Activated CD4-positive, alpha-beta T cell treated with anti-CD3 and anti-CD28 coated beads, Interleukin-2, amount 10 ng/mL, durations not matched to agents 24 days and 14 days (primary cell): ENCODE measurements at regions of chr10 and their contacts with region 1.

Region 1: DNA sequence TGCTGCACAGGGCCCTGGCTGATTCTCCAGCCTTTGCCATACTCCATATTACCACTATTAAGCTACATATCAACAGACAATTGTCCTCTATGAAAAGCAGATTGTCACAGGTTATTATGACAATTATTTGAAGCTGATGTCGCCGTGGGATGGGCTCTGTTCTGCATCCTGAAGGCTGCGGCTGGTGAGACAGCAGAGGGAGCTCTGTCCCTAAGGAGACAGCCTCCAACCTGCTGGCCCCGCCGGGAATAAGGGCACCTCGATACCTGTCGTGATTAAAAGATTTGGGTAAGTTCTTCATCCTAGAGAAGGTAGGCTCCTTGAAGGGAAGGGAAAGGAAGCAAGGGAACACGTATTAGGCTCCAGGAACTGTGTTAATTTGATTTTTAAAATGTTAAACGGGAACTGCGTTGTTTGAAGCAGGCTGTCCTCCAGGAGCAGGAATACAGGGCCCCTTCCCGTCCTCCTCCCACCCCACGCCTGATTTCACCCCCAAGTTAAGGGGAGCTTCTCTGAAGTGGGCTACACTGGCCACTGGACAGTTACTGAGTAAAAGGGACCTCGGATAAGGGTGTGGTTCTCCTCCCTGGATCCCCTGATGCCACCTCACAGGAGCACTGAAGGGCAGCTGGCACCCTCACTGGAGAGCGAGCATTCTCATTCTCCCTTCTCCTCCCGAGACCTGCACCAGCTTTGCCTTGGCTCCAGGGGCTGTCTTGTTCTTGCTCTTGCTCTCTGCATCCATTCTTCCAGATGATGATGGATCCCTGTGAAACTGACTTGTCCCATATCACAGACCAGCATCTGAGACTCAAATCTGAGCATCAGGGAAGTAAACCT is 11.8 kb upstream of the TIAL1 start:
- DNase-seq: no peak
- H3K4me3 Mint-ChIP-seq: no peak overlapping the region
- H3K27ac Mint-ChIP-seq: no peak overlapping the region
- H3K4me1 Mint-ChIP-seq: peaks cover 2% of the 10 kb centered on the region
- H3K27me3 Mint-ChIP-seq: peaks cover 9% of the 10 kb centered on the region

Region 2: DNA sequence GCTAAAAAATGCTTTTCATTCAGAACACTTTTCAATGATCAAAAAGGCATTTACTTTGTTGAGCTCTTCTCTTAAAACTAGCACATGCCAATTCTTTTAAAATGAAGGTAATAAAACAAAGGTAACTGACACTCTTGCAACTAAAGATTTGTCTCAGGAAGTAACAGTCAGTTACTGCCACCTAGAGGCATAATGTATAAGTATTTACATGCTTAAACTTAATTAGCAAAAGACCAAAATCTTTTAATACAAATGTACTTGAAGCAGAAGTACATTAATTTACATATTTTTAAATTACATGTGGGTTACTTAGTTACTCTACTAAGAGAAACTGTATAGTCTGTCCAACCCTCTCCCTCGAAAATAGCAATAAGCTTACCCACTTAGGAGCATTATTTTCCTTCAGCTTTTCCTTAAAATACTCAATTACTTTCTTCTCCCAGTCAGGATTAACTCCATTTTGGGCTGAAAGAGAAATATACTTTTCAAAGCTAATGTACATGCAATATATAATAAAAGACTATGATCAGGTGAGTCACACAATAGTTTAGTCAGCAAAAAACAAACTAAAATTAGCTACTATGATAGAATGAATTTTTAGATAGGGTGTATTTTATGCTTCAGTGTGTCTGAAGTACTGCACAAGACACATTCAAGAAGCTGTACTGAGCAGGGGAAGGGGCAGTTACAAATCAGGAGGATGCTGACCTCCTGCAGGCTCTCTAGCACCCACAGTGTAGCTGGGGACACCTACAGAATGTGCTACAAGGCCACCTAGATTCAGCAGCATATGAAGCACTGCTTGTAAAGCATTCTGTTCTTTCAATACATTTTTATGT is 251.1 kb after region 1 on chr10:
- intact Hi-C with region 1: loop called (anchors 5 kb)
- DNase-seq: peak; percentile 59
- H3K4me3 Mint-ChIP-seq: no peak overlapping the region
- H3K27ac Mint-ChIP-seq: peak overlapping the region; percentile 4
- H3K4me1 Mint-ChIP-seq: peaks cover 28% of the 10 kb centered on the region
- H3K27me3 Mint-ChIP-seq: no peaks in the 10 kb centered on the region